ENCODE measurements at regions of chr20 and their contacts with region 1.

Region 1: GRCh38 chr20:22226849-22227700 is 357.3 kb downstream of the FOXA2 start:
- DNase-seq: no peak
- ATAC-seq: no peak
- H3K4me3 ChIP-seq: no peak overlapping the region
- H3K27ac ChIP-seq: no peak overlapping the region
- H3K4me1 ChIP-seq: no peaks in the 10 kb centered on the region
- H3K27me3 ChIP-seq: no peaks in the 10 kb centered on the region
- CTCF ChIP-seq: no peak

Region 2: GRCh38 chr20:21509597-21510371 is 717.3 kb before region 1 on chr20:
- intact Hi-C with region 1: no loop called
- DNase-seq: peak in 1 of 6 donors; percentile 40
- ATAC-seq: no peak
- H3K4me3 ChIP-seq: peak overlapping the region in 1 of 4 donors; percentile 26
- H3K27ac ChIP-seq: no peak overlapping the region
- H3K4me1 ChIP-seq: peaks cover 0 to 11% (median 0%) of the 10 kb centered on the region in 3 donors
- H3K27me3 ChIP-seq: peaks cover 0 to 60% (median 5%) of the 10 kb centered on the region in 4 donors
- CTCF ChIP-seq: no peak

Region 3: GRCh38 chr20:22087991-22088390 is 139.1 kb before region 1 on chr20:
- intact Hi-C with region 1: no loop called
- DNase-seq: no peak
- ATAC-seq: no peak
- H3K4me3 ChIP-seq: no peak overlapping the region
- H3K27ac ChIP-seq: no peak overlapping the region
- H3K4me1 ChIP-seq: no peaks in the 10 kb centered on the region
- H3K27me3 ChIP-seq: no peaks in the 10 kb centered on the region
- CTCF ChIP-seq: no peak

Region 4: DNA sequence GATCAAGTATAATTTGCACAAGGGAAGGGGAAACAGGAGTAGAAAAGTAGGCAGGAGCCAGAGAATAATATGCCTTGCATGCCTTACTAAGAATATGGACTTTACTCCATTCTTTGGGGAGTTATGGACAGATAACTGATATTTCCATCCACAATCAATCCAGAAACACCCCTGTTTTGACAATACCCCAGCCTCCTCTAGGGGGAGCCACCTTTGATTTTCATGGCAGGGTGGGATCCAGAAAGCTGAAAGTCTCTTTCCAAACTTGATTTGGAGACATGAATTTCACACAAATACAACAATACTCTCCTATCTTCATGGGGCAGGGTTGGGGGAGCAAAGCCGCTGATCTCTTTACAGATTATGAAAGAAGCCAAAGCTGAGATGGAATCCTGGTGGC is 46.8 kb before region 1 on chr20:
- intact Hi-C with region 1: loop called in 1 of 3 experiments (anchors 10 kb)
- DNase-seq: no peak
- ATAC-seq: no peak
- H3K4me3 ChIP-seq: no peak overlapping the region
- H3K27ac ChIP-seq: no peak overlapping the region
- H3K4me1 ChIP-seq: no peaks in the 10 kb centered on the region
- H3K27me3 ChIP-seq: peaks cover 0 to 5% (median 0%) of the 10 kb centered on the region in 4 donors
- CTCF ChIP-seq: no peak

Measured in pancreas (tissue), 10 donors.